Activated CD4-positive, alpha-beta T cell treated with anti-CD3 and anti-CD28 coated beads for 36 hours (primary cell): ENCODE measurements at regions of chr4 and their contacts with region 1.

Region 1: DNA sequence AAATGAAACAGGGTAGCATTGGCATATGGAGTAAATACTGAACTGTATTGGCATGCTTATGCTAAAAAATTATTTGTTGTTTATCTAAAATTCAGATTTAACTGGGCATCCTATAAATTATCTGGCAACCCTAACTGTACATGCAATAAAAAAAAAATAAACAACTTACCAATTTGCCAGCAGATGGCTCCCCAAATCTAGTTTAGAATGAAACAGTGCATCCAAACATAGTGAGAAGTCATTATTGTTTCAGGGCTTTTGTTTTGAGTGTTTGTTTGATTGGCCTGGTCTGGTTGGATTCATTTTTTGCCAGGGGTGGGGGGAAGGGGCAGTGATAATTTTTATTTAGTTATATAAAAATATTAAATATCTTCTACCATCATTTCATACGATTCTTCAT is 12.8 kb upstream of the NSUN7 start:
- DNase-seq: no peak
- ATAC-seq: peak; percentile 30
- H3K4me3 Mint-ChIP-seq: no peak overlapping the region
- H3K27ac Mint-ChIP-seq: no peak overlapping the region
- H3K4me1 Mint-ChIP-seq: peaks cover 3% of the 10 kb centered on the region
- H3K27me3 Mint-ChIP-seq: peaks cover 6% of the 10 kb centered on the region

Region 2: DNA sequence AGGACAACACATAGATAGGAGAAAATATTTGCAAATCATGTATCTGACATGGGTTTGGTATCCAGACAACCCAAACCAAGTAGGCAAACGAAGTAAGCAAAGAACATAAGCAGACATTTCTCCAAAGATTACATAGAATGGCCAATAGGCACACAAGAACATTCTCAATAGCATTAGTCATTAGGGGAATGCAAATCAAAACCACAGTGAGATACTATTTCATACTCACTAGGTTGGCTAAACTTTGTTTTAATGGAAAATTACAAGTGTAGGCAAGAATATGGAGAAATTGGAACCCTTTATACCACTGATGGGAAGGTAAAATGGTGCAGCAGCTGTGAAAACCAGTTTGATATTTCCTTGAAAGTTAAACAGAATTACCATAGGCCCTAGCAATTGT is 327.1 kb before region 1 on chr4:
- CTCF ChIA-PET with region 1: no interaction called
- POLR2A ChIA-PET with region 1: no interaction called
- intact Hi-C with region 1: no loop called
- DNase-seq: no peak
- ATAC-seq: peak; percentile 39
- H3K4me3 Mint-ChIP-seq: no peak overlapping the region
- H3K27ac Mint-ChIP-seq: no peak overlapping the region
- H3K4me1 Mint-ChIP-seq: no peaks in the 10 kb centered on the region
- H3K27me3 Mint-ChIP-seq: peaks cover 2% of the 10 kb centered on the region

Region 3: GRCh38 chr4:40763228-40763716 is 26.4 kb after region 1 on chr4:
- CTCF ChIA-PET with region 1: no interaction called
- POLR2A ChIA-PET with region 1: no interaction called
- intact Hi-C with region 1: no loop called
- DNase-seq: peak; percentile 76
- ATAC-seq: peak; percentile 93
- H3K4me3 Mint-ChIP-seq: no peak overlapping the region
- H3K27ac Mint-ChIP-seq: peak overlapping the region; percentile 47
- H3K4me1 Mint-ChIP-seq: peaks cover 12% of the 10 kb centered on the region
- H3K27me3 Mint-ChIP-seq: peaks cover 1% of the 10 kb centered on the region

Region 4: GRCh38 chr4:40908702-40909362 is 171.9 kb after region 1 on chr4:
- CTCF ChIA-PET with region 1: interaction called, 4 read pairs
- POLR2A ChIA-PET with region 1: no interaction called
- intact Hi-C with region 1: loop called in 1 of 2 experiments (anchors 5 kb)
- DNase-seq: peak; percentile 90
- ATAC-seq: peak; percentile 85
- H3K4me3 Mint-ChIP-seq: peak overlapping the region; percentile 26
- H3K27ac Mint-ChIP-seq: peak overlapping the region; percentile 95
- H3K4me1 Mint-ChIP-seq: peaks cover 36% of the 10 kb centered on the region
- H3K27me3 Mint-ChIP-seq: no peaks in the 10 kb centered on the region